Calu3 (cell line): ENCODE measurements at regions of chr20 and their contacts with region 1.

Region 1: GRCh38 chr20:12925214-12925755 is 83.5 kb upstream of the SPTLC3 start:
- DNase-seq: peak; percentile 59
- H3K4me3 Mint-ChIP-seq: no peak overlapping the region
- H3K27ac Mint-ChIP-seq: no peak overlapping the region
- H3K4me1 Mint-ChIP-seq: peaks cover 37% of the 10 kb centered on the region
- H3K27me3 Mint-ChIP-seq: peaks cover 13% of the 10 kb centered on the region
- CTCF ChIP-seq: peak; percentile 66

Region 2: DNA sequence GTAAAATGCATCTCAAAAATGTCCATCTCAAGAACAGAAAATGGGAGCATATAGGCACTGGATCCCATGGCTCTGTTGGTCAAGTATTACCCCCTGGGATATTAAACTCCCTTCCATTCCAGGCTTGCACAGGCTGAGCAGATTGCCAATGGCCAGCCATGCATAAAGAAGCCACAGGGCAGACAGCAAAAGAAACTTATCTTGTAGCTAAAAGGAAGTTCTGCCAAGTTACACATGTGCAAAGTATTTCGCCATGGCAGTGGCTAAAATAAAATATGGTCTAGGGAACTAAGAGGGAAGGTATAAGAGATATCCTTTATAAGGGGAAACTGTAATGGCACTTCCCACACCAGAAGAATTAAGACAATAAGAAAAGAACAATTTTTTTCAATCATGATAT is 1423.2 kb before region 1 on chr20:
- CTCF ChIA-PET with region 1: no interaction called
- intact Hi-C with region 1: no loop called
- DNase-seq: no peak
- H3K4me3 Mint-ChIP-seq: no peak overlapping the region
- H3K27ac Mint-ChIP-seq: no peak overlapping the region
- H3K4me1 Mint-ChIP-seq: no peaks in the 10 kb centered on the region
- H3K27me3 Mint-ChIP-seq: no peaks in the 10 kb centered on the region
- CTCF ChIP-seq: no peak

Region 3: DNA sequence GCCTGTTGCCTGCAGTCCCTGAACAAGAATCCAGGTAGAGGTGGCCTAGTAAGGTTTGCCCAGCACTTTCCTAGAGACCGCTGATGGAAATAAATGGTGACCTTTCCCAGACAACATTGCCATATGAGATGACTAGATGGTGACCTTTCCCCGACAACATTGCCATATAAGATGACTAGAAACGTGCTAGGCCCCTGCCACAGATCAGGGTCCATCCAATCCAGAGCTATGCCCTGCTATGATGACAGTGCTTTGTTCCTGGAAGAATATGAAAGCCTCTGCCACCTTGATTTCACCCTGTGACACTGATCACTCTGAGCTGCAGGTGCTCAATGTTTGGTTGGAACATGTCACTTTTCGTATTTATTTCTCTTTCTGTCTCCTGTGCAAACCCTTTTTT is 50.4 kb before region 1 on chr20:
- CTCF ChIA-PET with region 1: no interaction called
- intact Hi-C with region 1: no loop called
- DNase-seq: no peak
- H3K4me3 Mint-ChIP-seq: no peak overlapping the region
- H3K27ac Mint-ChIP-seq: no peak overlapping the region
- H3K4me1 Mint-ChIP-seq: no peaks in the 10 kb centered on the region
- H3K27me3 Mint-ChIP-seq: peaks cover 18% of the 10 kb centered on the region
- CTCF ChIP-seq: no peak

Region 4: DNA sequence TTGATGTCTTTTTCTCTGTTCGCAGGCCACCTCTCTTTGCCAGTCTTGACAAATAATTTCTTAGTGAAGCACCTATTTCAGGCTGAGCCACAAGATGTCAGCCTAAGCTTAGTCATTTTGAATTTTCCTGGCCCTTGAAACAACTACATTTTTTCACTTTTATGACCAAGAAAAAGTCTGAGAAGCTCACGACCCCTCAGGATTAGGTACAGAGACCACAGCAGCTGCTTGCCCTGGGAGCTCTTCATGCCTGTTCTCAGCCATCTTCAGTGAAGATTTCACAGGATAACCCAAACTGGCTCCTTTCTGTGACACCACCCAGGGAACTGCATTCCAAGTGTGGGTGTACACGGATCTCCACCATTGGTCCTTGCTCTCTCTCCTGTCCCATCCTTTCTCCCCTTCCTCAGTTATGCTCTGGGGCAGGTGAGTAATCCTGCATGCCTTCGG is 45.1 kb after region 1 on chr20:
- CTCF ChIA-PET with region 1: interaction called, 18 read pairs
- intact Hi-C with region 1: loop called (anchors 1 kb)
- DNase-seq: peak; percentile 13
- H3K4me3 Mint-ChIP-seq: no peak overlapping the region
- H3K27ac Mint-ChIP-seq: no peak overlapping the region
- H3K4me1 Mint-ChIP-seq: no peaks in the 10 kb centered on the region
- H3K27me3 Mint-ChIP-seq: no peaks in the 10 kb centered on the region
- CTCF ChIP-seq: no peak

Region 5: GRCh38 chr20:13105864-13106457 is 180.7 kb after region 1 on chr20:
- CTCF ChIA-PET with region 1: no interaction called
- intact Hi-C with region 1: loop called (anchors 1 kb)
- DNase-seq: no peak
- H3K4me3 Mint-ChIP-seq: no peak overlapping the region
- H3K27ac Mint-ChIP-seq: no peak overlapping the region
- H3K4me1 Mint-ChIP-seq: peaks cover 7% of the 10 kb centered on the region
- H3K27me3 Mint-ChIP-seq: no peaks in the 10 kb centered on the region
- CTCF ChIP-seq: peak; percentile 26

Region 6: DNA sequence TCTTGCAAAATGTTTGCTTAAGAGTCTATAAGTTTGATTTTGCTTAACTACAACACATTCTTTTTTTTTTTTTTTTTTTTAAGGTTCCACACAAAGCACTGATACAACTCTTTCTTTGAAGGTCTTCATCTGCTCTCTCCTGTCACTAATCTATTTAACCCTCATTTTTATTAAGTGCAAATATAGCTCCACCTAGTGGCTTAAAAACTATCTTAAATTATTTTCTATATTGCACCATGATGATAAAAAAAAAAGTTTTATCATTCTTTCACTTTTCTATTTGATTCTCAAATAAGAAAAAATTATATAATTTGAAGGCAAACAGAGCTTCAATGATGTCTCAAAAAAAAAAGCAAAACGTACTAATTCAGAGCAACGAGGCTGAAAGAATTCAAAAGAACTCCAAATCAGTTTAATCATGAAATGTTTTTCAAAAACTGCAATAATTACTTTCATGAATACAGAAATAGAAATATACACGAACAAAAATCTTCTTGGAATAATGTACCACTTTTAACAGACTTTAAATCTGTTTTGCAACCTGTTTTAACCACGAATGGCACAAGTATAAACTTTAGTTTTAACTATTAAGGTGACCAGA is 846.7 kb after region 1 on chr20:
- CTCF ChIA-PET with region 1: no interaction called
- intact Hi-C with region 1: loop called (anchors 2 kb)
- DNase-seq: no peak
- H3K4me3 Mint-ChIP-seq: no peak overlapping the region
- H3K27ac Mint-ChIP-seq: no peak overlapping the region
- H3K4me1 Mint-ChIP-seq: peaks cover 3% of the 10 kb centered on the region
- H3K27me3 Mint-ChIP-seq: no peaks in the 10 kb centered on the region
- CTCF ChIP-seq: no peak